ENCODE measurements at regions of chr11 and their contacts with region 1.

Region 1: DNA sequence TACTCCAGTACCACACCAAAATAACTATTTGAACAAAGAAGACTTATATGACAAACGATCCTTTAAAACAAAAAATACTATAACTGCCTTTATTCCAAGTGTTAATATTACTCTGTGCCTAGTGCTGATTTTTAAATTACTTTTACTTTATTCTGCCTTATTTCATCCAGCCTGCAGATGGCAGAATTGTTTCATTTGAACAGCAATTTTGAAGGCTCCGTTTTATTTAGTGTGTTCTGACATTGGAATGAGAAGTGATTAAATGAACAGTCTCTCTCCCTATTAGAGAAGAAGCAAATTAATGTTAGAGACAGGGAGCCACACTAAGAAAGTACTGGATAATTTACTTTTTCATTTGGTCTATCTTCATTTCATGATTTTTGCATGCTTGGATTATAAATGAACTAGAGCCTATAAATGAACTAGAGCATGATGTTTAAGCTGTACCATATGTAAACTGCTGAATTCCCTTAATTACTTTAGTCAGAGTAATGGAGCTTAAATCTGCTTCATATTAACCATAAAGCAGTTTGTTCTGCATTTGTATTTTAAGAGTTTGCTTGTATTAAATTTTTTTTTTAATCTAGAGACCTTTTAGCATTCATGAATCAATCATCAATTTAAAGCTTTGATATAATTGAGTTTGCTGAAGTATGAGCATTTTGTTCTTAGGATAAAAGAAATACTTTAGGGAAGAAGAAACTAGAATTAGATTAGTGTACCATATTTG is 9.8 kb downstream of the PDHX start:
- DNase-seq: no peak
- ATAC-seq: peak; percentile 24

Region 2: DNA sequence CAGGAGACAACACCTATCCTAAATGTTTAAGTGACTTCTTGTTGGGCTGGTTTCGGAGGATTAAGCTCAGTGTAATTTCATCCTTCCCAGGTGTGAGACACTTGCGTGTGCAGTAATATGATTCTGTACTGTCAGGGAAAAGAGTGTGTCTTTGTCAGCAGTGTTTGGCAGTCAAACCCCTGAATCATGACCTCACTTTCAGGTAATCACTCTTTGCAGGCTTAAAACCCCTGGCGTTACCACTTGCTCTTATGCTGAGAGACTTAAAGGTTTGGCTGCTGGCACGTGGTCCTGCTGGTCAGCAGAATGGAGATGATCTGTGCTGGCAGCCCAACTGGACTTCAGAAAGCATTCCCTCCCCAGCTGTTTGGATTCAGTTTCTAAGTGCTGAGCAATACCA is 66.2 kb before region 1 on chr11:
- intact Hi-C with region 1: no loop called
- DNase-seq: no peak
- ATAC-seq: no peak

Region 3: GRCh38 chr11:35391922-35392813 is 465.9 kb after region 1 on chr11:
- intact Hi-C with region 1: loop called in 1 of 2 experiments (anchors 5 kb)
- DNase-seq: peak; percentile 63 to 87
- ATAC-seq: peak; percentile 75

Region 4: DNA sequence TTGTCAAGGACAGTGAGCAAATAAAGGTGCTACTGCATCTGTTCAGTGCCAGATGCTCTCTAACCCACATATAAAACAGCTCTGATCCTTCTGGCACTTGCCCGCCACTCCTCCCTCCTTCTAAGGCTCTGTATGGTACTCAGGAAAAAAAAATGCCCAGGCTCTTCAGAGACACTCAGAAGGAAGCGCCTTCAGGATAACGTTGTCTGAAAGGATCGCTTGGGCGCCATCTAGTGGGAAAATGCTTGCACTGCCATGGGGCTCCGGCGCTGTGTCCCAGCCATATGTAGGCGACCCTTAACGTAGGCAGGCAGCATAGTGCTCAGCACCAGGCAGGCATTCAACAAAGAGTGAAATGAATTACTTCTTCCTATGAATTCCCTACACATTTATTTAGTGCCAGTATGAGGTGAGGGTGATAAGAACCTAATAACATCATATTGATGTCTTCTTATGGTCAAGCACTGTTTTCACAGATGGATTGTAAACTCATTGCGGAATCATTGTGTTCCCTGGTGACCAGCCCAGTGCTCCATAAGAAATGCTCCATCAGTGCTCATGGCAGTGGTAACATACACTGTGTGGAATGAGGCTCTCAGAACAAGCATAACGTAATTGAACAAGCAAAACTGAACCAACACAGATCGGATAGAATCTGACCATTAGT is 559.5 kb after region 1 on chr11:
- intact Hi-C with region 1: loop called in 1 of 2 experiments (anchors 10 kb)
- DNase-seq: peak; percentile 46 to 80
- ATAC-seq: peak; percentile 91

Measured in left colon (tissue), 2 donors.